GM12878 (cell line): ENCODE measurements at regions of chr19 and their contacts with region 1.

Region 1: GRCh38 chr19:11924886-11925650 is at the start of gene ZNF700:
- DNase-seq: peak; percentile 92
- ATAC-seq: peak; percentile 93
- H3K4me3 ChIP-seq: peak within 1 kb of the TSS; percentile 96
- H3K27ac ChIP-seq: peak within 1 kb of the TSS; percentile 94
- H3K4me1 ChIP-seq: peaks cover 3% of the 10 kb centered on the region; the same call in 1 of the 2 replicates
- H3K27me3 ChIP-seq: no peaks in the 10 kb centered on the region
- CTCF ChIP-seq: no peak
- EP300 ChIP-seq: no peak
- POLR2A ChIP-seq: peak; percentile 96
- RAD21 ChIP-seq: no peak
- polyA plus RNA-seq, gene ZNF700: 6.7 to 8.3 TPM

Region 2: GRCh38 chr19:11558881-11559828 is 365.9 kb before region 1 on chr19 and contains the start of gene ELOF1:
- CTCF ChIA-PET with region 1: no interaction called
- POLR2A ChIA-PET with region 1: interaction called, 4 read pairs
- RAD21 ChIA-PET with region 1: interaction called, 3 read pairs
- SMC1A ChIA-PET with region 1: no interaction called
- in situ Hi-C with region 1: no loop called
- intact Hi-C with region 1: loop called (anchors 10 kb)
- DNase-seq: peak; percentile 96
- ATAC-seq: peak; percentile 90
- H3K4me3 ChIP-seq: peak within 1 kb of the TSS; percentile 94
- H3K27ac ChIP-seq: peak within 1 kb of the TSS; percentile 58
- H3K4me1 ChIP-seq: peaks cover 5% of the 10 kb centered on the region
- H3K27me3 ChIP-seq: no peaks in the 10 kb centered on the region
- CTCF ChIP-seq: peak in 1 of 3 experiments; percentile 12; a peak in 1 of 6 replicates
- EP300 ChIP-seq: no peak
- POLR2A ChIP-seq: peak; percentile 89
- RAD21 ChIP-seq: no peak
- polyA plus RNA-seq, gene ELOF1: 11.7 to 28.6 TPM

Region 3: DNA sequence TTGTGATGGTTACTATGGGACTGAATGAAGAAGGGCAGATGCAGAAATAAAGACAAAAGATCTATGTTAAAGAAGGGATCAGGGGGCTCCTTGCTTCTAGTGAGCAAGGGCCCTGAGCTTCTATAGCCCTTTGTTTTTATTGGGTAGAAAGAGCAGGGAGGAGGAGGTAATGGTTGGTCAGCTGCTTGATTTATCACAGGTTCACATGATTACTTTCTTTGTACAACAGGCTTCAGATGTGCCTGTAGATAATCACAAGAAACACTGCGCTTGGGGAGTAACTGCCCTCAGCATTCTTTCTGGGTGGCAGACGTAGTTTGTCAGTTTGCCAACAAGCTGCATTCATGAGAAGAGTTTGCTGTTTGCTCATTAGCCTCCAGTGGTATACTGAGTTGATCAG is 81.3 kb before region 1 on chr19:
- CTCF ChIA-PET with region 1: no interaction called
- POLR2A ChIA-PET with region 1: no interaction called
- RAD21 ChIA-PET with region 1: no interaction called
- SMC1A ChIA-PET with region 1: no interaction called
- in situ Hi-C with region 1: no loop called
- intact Hi-C with region 1: no loop called
- DNase-seq: no peak
- ATAC-seq: no peak
- H3K4me3 ChIP-seq: no peak overlapping the region
- H3K27ac ChIP-seq: no peak overlapping the region
- H3K4me1 ChIP-seq: 0 out of 2 replicates have a peak, but pooled peaks cover 3% of the 10 kb centered on the region
- H3K27me3 ChIP-seq: no peaks in the 10 kb centered on the region
- CTCF ChIP-seq: no peak
- EP300 ChIP-seq: no peak
- POLR2A ChIP-seq: no peak
- RAD21 ChIP-seq: no peak

Region 4: DNA sequence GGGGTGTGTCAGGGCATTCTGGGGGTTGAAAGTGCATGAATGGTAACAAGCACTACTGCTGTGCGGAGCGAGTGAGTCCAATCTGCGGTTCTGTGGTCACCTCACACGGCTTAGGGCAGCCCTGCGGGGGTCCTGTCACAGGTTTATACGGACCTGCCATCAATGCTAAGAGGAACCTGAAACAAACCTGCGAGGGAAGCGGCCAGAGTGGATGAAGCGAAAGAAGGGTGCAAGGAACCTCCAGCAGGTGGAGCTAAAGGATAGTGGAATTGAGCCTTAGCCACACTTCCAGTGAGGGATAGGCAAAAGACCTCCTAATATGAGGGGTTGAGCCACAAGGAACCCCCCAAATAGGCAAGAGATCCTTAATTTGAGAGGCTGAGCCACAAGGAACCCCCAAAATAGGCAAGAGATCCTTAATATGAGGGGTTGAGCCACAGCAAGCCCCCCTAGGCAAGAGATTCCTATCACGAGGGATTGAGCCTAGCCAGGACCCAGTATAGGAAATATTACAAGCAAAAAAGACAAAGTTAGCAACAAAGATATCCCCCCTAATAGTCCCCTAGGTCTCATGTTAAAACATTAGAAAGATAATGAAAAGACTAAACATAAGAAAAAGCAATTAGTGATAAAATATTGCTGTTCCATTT is 43.8 kb before region 1 on chr19:
- CTCF ChIA-PET with region 1: interaction called, 19 read pairs
- POLR2A ChIA-PET with region 1: no interaction called
- RAD21 ChIA-PET with region 1: interaction called, 3 read pairs
- SMC1A ChIA-PET with region 1: interaction called, 4 read pairs
- in situ Hi-C with region 1: no loop called
- intact Hi-C with region 1: no loop called
- DNase-seq: peak; percentile 17
- ATAC-seq: peak; percentile 48; the same call in 2 of the 3 replicates
- H3K4me3 ChIP-seq: no peak overlapping the region
- H3K27ac ChIP-seq: no peak overlapping the region
- H3K4me1 ChIP-seq: no peaks in the 10 kb centered on the region
- H3K27me3 ChIP-seq: no peaks in the 10 kb centered on the region
- CTCF ChIP-seq: peak; percentile 49 to 68 (median 58)
- EP300 ChIP-seq: no peak
- POLR2A ChIP-seq: no peak
- RAD21 ChIP-seq: peak; percentile 45

Region 5: DNA sequence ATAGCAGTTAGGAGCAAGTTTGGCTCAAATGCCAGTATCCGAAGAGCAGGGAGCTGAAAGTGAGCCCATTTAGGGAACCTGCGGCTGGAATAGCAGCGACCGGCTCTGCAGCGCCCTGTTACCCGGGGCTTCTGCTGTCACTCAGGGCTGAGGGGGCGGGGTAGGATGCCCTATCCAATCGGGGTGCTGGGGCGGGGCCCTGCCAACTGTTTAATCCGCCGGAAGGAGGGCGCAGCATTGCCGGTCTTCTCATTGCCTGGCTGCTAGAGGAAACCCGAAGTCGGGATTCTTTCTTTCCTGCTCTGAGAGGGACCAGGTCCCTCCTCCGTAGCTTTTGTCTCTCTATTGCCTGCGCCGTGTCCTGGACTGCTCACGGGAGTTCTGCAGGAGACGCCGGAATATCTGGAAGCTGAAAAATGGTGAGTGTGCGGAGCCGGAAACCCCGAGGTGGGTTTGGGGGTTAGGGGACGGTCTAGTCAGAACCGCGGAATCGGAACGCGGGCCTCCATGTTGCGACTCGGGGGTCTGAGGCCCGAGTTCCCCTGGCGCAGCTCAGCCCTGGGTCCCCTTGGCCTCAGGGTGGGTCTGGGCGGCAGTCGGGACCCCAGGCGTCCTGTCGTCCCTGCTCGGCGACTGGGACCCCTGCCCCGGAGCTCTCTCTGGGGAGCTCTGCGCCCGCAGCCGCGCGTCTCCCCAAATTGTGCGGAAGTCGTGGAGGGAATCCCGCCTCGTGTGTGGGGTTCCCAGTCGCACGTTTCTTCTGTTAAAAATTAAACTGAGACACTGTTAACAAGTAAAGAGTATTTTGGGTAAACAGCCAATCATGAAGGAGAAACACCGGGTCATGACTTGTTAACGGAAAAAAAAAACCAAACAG is 62.6 kb after region 1 on chr19:
- CTCF ChIA-PET with region 1: interaction called, 181 read pairs
- POLR2A ChIA-PET with region 1: interaction called, 37 read pairs
- RAD21 ChIA-PET with region 1: interaction called, 105 read pairs
- SMC1A ChIA-PET with region 1: interaction called, 133 read pairs
- in situ Hi-C with region 1: no loop called
- intact Hi-C with region 1: loop called (anchors 1 kb)
- DNase-seq: peak; percentile 68
- ATAC-seq: peak; percentile 99
- H3K4me3 ChIP-seq: peak overlapping the region; percentile 96
- H3K27ac ChIP-seq: peak overlapping the region; percentile 82
- H3K4me1 ChIP-seq: no peaks in the 10 kb centered on the region
- H3K27me3 ChIP-seq: no peaks in the 10 kb centered on the region
- CTCF ChIP-seq: no peak
- EP300 ChIP-seq: 0 out of 4 replicates have a peak, but pooled peaks of 1 of the 2 experiments have one; percentile 8
- POLR2A ChIP-seq: peak; percentile 81
- RAD21 ChIP-seq: no peak

Region 6: DNA sequence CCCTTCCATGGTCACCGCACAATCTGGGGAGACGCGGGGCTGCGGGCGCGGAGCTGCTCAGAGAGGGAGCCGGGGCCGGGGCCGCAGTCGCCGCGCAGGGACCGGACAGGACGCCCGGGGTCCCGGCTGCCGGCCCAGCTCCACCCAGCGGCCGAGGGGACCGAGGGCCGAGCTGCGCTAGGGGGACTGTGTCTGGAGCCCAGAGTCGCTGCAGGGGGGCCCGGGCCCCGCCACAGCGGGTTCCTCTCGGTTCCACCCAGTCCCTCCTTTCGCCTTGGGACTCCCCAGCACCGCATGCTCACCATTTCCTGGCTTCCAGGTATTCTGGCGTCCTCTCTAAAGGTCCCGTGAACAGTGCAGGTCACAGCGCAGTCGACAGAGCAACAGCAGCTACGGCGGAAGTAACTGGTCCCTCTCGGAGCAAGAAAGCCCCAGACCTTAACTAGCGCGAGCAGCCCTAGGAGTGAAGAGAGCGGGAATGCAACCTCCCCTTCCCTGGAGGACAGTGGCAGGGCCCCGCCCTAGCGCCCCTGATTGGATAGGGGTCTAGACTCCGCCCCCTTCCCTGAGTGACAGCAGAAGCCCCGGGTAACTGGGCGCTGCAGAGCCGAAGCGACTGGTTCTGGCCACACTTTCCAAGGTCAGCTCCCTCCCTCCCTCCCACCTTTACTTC is 127.6 kb after region 1 on chr19 and contains the start of gene ZNF878:
- CTCF ChIA-PET with region 1: interaction called, 21 read pairs
- POLR2A ChIA-PET with region 1: interaction called, 5 read pairs
- RAD21 ChIA-PET with region 1: interaction called, 11 read pairs
- SMC1A ChIA-PET with region 1: interaction called, 15 read pairs
- in situ Hi-C with region 1: no loop called
- intact Hi-C with region 1: loop called (anchors 5 kb)
- DNase-seq: peak; percentile 67
- ATAC-seq: peak; percentile 96
- H3K4me3 ChIP-seq: peak within 1 kb of the TSS; percentile 86
- H3K27ac ChIP-seq: peak within 1 kb of the TSS; percentile 67
- H3K4me1 ChIP-seq: no peaks in the 10 kb centered on the region
- H3K27me3 ChIP-seq: no peaks in the 10 kb centered on the region
- CTCF ChIP-seq: peak; percentile 12 to 26 (median 18); a peak in 3 of 6 replicates
- EP300 ChIP-seq: no peak
- POLR2A ChIP-seq: peak; percentile 92
- RAD21 ChIP-seq: no peak
- polyA plus RNA-seq, gene ZNF878: 0.24 to 0.79 TPM

Region 7: GRCh38 chr19:12092065-12092867 is 167.2 kb after region 1 on chr19:
- CTCF ChIA-PET with region 1: interaction called, 26 read pairs
- POLR2A ChIA-PET with region 1: no interaction called
- RAD21 ChIA-PET with region 1: interaction called, 7 read pairs
- SMC1A ChIA-PET with region 1: interaction called, 5 read pairs
- in situ Hi-C with region 1: no loop called
- intact Hi-C with region 1: no loop called
- DNase-seq: peak; percentile 16
- ATAC-seq: peak; percentile 74
- H3K4me3 ChIP-seq: peak overlapping the region; percentile 52
- H3K27ac ChIP-seq: peak overlapping the region; percentile 68
- H3K4me1 ChIP-seq: no peaks in the 10 kb centered on the region
- H3K27me3 ChIP-seq: no peaks in the 10 kb centered on the region
- CTCF ChIP-seq: no peak
- EP300 ChIP-seq: no peak
- POLR2A ChIP-seq: peak; percentile 63
- RAD21 ChIP-seq: no peak